GM10248 (cell line): ENCODE measurements at regions of chr10 and their contacts with region 1.

Region 1: GRCh38 chr10:113252650-113253618 is 299.9 kb upstream of the HABP2 start:
- DNase-seq: no peak
- CTCF ChIP-seq: no peak

Region 2: GRCh38 chr10:112946649-112947048 is 306.3 kb before region 1 on chr10:
- CTCF ChIA-PET with region 1: no interaction called
- POLR2A ChIA-PET with region 1: no interaction called
- DNase-seq: no peak
- CTCF ChIP-seq: no peak

Region 3: GRCh38 chr10:113239566-113240350 is 13.2 kb before region 1 on chr10:
- CTCF ChIA-PET with region 1: no interaction called
- POLR2A ChIA-PET with region 1: no interaction called
- DNase-seq: no peak
- CTCF ChIP-seq: no peak

Region 4: DNA sequence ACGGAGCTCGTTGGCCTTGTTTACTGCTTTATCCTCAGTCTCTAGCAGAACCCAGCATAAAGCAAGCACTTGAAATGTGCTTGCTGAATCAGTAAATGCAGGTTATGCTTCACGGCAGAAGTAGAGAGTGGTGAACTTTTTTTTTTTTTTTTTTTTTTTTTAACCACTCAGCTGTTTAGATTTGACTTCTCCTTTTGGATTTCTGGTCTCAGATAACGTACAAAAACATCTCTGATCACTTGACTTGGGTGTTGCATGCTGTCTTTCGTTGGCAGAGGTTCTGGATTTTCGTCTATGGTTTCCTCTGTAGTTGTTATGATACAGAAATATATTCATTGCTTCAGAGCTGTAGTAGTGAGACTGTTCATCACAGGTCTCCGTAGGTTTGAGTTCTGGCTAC is 57.4 kb after region 1 on chr10:
- CTCF ChIA-PET with region 1: no interaction called
- POLR2A ChIA-PET with region 1: interaction called, 10 read pairs
- DNase-seq: no peak
- CTCF ChIP-seq: no peak